ENCODE measurements at regions of chr15 and their contacts with region 1.

Region 1: GRCh38 chr15:47987908-47988532 is 132.8 kb upstream of the SLC24A5 start:
- DNase-seq: no peak
- H3K4me3 ChIP-seq: no peak overlapping the region
- H3K27ac ChIP-seq: no peak overlapping the region
- H3K4me1 ChIP-seq: no peaks in the 10 kb centered on the region
- H3K27me3 ChIP-seq: no peaks in the 10 kb centered on the region
- CTCF ChIP-seq: peak; percentile 51 to 69 (median 61)
- POLR2A ChIP-seq: no peak

Region 2: GRCh38 chr15:47196057-47196456 is 792.0 kb before region 1 on chr15:
- intact Hi-C with region 1: loop called (anchors 5 kb)
- DNase-seq: no peak
- H3K4me3 ChIP-seq: no peak overlapping the region
- H3K27ac ChIP-seq: no peak overlapping the region
- H3K4me1 ChIP-seq: peaks cover 3% of the 10 kb centered on the region
- H3K27me3 ChIP-seq: no peaks in the 10 kb centered on the region
- CTCF ChIP-seq: peak; percentile 81 to 87 (median 84)
- POLR2A ChIP-seq: no peak